Head of caudate nucleus (tissue), 42 donors: ENCODE measurements at regions of chr2 and their contacts with region 1.

Region 1: DNA sequence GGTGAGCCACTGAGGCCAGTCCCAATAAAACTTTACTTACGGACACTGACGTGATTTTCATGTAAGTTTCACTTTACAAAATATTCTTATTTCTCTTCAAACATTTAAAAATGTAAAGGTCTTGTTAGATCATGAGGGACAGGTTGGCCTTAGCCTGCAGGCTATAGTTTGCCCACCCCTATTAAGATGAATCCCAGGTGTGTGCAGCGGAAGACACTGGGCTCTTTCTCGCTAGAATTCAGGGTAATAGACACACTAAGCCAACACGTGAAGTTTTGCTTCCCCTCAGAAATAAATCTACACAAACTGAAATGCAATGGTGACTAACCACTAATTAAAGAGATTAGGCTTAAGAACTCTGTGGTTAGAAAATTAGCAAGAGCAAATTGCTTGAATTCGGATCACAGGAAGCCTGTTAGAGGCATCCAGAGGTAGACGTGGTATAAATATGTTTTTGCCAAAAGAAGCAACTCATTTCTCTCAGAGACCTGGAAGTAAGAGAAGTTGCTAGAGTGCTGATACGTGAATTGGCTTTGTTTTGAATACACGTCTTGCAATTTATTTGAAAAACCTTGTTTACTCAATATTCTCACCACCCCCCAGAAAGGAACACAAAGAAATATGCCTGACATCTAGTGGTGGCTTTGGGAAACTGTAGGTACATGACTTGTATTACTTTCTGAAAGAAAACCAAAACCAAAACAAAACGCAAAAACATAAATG is 151.6 kb downstream of the DTNB start:
- DNase-seq: peak in 13 of 42 donors; percentile 16 to 69 (median 32)

Region 2: GRCh38 chr2:25376750-25377621 is 144.8 kb before region 1 on chr2:
- intact Hi-C with region 1: loop called (anchors 10 kb)
- DNase-seq: peak; percentile 61 to 92 (median 85)

Region 3: GRCh38 chr2:25419678-25420242 is 102.1 kb before region 1 on chr2:
- intact Hi-C with region 1: no loop called
- DNase-seq: no peak

Region 4: GRCh38 chr2:25726522-25726921 is 204.7 kb after region 1 on chr2:
- intact Hi-C with region 1: no loop called
- DNase-seq: no peak

Region 5: GRCh38 chr2:26068602-26069298 is 546.9 kb after region 1 on chr2:
- intact Hi-C with region 1: no loop called
- DNase-seq: peak in 13 of 42 donors; percentile 12 to 68 (median 33)